Right cardiac atrium (tissue), 5 donors: ENCODE measurements at regions of chr12 and their contacts with region 1.

Region 1: GRCh38 chr12:49288412-49288853 is 6.5 kb upstream of the PRPH start:
- DNase-seq: peak in 1 of 3 donors; percentile 73
- ATAC-seq: no peak
- H3K4me3 ChIP-seq: no peak overlapping the region
- H3K27ac ChIP-seq: no peak overlapping the region
- H3K4me1 ChIP-seq: no peaks in the 10 kb centered on the region
- H3K27me3 ChIP-seq: no peaks in the 10 kb centered on the region

Region 2: DNA sequence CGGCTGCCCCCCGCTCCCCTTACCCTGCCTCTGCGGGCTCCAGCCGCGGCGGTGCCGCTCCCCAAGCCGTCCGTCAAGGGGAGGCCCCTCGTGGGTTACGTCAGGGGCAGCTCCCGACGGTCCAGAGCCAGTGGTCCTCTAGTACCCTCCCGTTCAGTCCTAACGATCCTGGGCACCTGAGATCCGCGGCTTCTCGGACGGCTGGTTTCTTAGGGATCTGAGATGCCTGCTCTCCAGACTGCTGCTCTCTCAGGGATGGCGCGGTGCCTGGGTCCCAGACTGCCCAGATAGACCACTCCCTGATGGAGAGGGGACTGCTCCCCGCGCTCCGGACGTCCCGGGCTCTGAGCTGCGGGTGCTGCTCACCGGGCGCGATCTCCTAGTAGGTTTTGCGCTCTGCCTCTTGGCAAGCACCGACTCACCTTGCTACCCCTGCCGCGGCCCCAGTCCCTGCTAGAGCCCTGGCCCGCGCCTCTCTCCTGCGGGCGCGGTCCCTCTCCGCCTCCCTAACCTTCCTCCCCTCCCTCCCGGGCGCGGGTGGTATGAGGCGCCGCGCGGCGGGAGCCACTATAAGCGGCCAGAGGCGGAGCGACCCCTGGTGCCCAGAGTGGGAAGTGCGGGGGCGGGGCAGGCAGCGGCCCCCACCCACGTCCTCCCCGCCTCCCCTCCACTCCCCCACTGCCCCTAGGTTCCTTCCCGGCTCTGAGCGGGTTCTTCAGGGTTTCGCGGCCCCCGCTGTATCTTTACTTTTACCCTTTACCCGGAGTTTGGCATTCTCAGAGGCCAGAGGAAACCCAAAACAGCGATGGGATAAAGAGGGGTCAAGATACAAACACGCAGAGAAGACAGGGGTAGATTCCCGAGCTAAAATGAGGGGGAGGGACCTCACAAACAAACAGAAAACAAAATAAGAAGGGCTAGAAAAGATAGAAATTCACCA is 48.5 kb after region 1 on chr12 and contains the start of gene C1QL4:
- intact Hi-C with region 1: loop called (anchors 5 to 10 kb)
- DNase-seq: peak; percentile 85 to 94 (median 93)
- ATAC-seq: peak; percentile 83 to 89
- H3K4me3 ChIP-seq: peak within 1 kb of the TSS; percentile 41
- H3K27ac ChIP-seq: no peak within 1 kb of the TSS
- H3K4me1 ChIP-seq: peaks cover 2% of the 10 kb centered on the region
- H3K27me3 ChIP-seq: no peaks in the 10 kb centered on the region
- total RNA-seq, gene C1QL4: not detected

Region 3: GRCh38 chr12:49342066-49342913 is 53.9 kb after region 1 on chr12:
- intact Hi-C with region 1: loop called (anchors 5 to 10 kb)
- DNase-seq: peak; percentile 78 to 89 (median 87)
- ATAC-seq: peak; percentile 52 to 68
- H3K4me3 ChIP-seq: peak overlapping the region; percentile 24
- H3K27ac ChIP-seq: no peak overlapping the region
- H3K4me1 ChIP-seq: peaks cover 5% of the 10 kb centered on the region
- H3K27me3 ChIP-seq: no peaks in the 10 kb centered on the region

Region 4: DNA sequence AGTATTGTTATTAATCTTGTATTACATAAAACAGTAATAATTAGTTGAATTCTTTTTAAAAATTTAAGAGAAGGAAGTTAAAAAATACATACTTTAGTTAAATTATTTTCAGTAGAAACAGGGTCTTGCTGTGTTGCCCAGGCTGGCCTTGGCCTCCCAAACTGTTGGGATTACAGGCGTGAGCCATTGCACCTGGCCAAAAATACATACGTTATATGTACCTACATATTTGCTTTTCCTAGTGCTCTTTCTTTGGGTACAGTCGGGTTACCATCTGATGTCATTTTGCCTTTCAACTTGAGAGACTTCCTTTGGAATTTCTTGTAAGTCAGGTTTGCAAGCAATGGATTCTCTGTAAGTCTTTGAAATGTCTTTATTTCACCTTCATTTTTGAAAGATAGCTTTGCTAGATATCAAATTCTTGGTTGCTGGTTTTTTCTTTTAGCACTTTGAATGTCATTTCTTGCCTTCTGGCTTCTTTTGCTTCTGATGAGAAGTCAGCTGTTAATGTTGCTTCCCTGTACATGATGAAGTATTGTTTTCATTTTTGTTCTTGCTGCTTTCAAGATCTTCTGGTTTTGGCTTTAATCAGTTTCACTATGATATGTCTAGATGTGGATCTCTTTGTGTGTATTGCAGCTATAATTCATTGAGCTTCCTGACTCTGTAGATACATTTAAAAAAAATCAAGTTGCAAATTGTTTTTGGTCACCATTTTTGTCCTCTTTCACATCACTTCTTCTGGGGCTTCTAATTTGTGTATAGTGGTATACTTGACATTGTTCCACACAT is 163.2 kb after region 1 on chr12:
- intact Hi-C with region 1: no loop called
- DNase-seq: no peak
- ATAC-seq: no peak
- H3K4me3 ChIP-seq: no peak overlapping the region
- H3K27ac ChIP-seq: no peak overlapping the region
- H3K4me1 ChIP-seq: peaks cover 2% of the 10 kb centered on the region
- H3K27me3 ChIP-seq: no peaks in the 10 kb centered on the region